ENCODE measurements at regions of chr1 and their contacts with region 1.

Region 1: DNA sequence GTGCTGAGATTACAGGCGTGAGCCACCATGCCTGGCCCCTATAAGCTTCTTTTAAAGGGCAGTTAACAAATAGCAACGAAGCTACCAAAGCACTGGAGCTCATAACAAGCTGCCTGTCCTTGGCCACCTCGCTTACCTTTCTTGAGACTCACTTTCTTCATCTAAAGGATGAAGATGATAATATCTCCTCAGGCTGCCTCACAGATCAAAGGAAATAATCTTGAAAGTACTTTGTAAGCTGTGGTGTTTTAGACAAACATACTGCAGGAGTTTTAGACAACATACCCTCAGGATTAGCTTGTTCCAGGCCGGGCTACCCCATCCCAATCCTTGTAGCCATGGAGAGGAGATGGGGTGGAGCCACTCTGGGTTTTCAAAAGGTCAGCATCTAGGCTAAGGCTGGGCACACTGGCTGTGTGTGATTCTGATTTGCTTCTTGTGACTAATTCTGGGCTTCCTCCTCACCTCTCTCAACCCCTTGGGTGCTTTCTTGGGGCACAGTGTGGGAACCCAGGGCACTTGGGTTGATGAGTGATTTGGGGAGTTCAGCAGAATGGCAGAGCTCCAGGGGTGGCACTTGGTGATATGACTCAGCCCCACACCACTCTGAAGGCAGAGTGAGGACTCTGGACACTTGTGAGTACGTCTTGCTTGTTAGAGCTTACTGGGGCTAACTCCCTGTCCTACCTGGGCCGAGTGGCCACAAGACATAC is 5.2 kb downstream of the GPR25 start:
- DNase-seq: peak; percentile 16
- CTCF ChIP-seq: no peak

Region 2: DNA sequence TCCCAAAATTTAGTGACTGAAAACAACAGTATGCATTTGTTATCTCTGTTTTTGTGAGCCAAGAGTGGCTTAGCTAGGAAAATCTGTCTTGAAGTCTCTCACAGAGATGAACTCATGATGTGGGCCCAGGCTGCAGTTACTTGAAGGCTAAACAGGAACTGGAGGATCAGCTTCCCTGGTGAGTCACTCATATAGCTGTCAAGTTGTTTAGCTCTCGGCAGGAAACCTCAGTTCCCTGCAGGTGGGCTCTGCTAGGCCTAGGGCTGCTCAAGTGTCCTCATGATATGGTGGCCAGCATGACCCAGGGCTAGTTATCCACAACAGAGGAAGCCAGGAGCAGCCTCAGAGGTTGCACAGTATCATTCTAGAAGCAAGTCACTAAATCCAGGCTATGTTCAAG is 178.1 kb before region 1 on chr1:
- CTCF ChIA-PET with region 1: no interaction called
- POLR2A ChIA-PET with region 1: no interaction called
- DNase-seq: no peak
- CTCF ChIP-seq: no peak

Region 3: GRCh38 chr1:200866521-200866920 is 11.5 kb before region 1 on chr1:
- CTCF ChIA-PET with region 1: interaction called, 13 read pairs
- POLR2A ChIA-PET with region 1: interaction called, 3 read pairs
- DNase-seq: peak; percentile 82
- CTCF ChIP-seq: no peak

Region 4: GRCh38 chr1:200890818-200891773 is 13.1 kb after region 1 on chr1:
- CTCF ChIA-PET with region 1: interaction called, 63 read pairs
- POLR2A ChIA-PET with region 1: interaction called, 4 read pairs
- DNase-seq: no peak
- CTCF ChIP-seq: peak; percentile 72

Region 5: DNA sequence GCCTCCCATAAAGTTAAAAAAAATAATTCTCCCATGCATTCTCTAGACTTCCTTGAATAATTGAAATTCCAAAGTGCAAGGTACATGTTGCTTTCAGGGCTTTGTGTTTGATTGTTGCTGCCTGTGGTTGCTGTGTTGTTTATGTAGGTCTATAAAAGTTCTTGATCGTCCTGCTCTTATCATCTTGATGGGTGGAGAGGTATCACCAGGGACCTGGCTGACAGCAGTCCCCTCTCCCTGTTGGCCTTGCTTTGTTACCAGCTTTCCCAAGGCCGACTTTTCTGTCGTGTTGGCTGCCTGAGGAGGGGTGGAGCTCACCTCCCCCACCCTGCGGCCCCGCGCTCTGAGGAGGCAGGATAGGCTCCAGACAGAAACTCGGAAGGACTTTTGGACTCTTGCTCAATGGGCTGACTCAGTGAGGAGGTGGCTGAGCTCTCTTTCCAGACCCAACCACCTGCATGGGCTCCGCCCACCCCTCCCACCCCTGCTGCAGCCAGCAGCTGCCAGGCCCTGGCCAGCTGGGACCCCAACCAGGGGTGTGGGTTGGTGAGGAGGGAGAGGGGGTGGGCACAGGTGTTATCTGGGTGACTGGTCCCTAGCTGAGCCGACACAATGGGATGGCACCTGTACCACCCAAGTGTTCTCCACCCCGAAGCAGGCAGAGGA is 18.7 kb after region 1 on chr1:
- CTCF ChIA-PET with region 1: interaction called, 63 read pairs
- POLR2A ChIA-PET with region 1: no interaction called
- DNase-seq: no peak
- CTCF ChIP-seq: no peak

Region 6: DNA sequence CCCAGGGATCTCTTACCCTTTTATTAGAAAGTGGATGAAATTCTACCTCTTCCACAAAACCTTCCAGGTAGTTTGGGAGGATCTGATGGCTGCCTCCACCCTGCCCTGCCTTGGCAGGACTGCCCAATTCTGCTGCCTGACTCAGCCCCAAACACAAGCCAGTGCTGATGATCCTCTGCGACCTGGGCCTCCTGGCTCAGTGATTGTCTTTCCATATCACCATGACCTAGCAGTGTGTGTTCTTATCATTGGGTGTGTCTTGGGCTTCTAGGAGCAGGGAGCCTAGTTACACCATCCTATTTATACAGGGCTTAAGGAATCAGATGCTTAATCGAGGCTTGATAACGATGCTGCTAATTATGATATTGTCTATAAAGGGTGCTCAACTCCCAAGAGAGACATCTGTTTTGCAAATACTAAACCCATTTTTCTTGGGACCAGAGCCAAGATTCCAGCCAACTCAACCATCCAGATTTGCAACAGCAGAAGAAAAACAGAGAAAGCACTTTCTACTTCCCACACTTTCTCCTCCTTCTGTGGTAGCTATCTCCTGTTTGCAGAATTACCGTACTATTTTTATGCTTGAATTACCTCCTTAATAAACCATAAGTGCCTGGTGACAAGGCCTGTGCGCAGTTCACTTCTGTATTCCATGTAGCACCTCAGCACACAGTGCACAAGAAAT is 182.0 kb after region 1 on chr1:
- CTCF ChIA-PET with region 1: no interaction called
- POLR2A ChIA-PET with region 1: no interaction called
- DNase-seq: no peak
- CTCF ChIP-seq: no peak

Measured in GM10248 (cell line).